ENCODE measurements at regions of chr19 and their contacts with region 1.

Region 1: GRCh38 chr19:2449019-2449418 is 7.7 kb downstream of the LMNB2 start:
- DNase-seq: no peak
- H3K4me3 ChIP-seq: no peak overlapping the region
- H3K4me3 Mint-ChIP-seq: no peak overlapping the region
- H3K27ac ChIP-seq: no peak overlapping the region
- H3K27ac Mint-ChIP-seq: peak overlapping the region in 1 of 8 donors; percentile 68
- H3K4me1 ChIP-seq: no peaks in the 10 kb centered on the region
- H3K4me1 Mint-ChIP-seq: peaks cover 7 to 24% (median 10%) of the 10 kb centered on the region in 3 donors
- H3K27me3 ChIP-seq: no peaks in the 10 kb centered on the region
- H3K27me3 Mint-ChIP-seq: no peaks in the 10 kb centered on the region

Region 2: DNA sequence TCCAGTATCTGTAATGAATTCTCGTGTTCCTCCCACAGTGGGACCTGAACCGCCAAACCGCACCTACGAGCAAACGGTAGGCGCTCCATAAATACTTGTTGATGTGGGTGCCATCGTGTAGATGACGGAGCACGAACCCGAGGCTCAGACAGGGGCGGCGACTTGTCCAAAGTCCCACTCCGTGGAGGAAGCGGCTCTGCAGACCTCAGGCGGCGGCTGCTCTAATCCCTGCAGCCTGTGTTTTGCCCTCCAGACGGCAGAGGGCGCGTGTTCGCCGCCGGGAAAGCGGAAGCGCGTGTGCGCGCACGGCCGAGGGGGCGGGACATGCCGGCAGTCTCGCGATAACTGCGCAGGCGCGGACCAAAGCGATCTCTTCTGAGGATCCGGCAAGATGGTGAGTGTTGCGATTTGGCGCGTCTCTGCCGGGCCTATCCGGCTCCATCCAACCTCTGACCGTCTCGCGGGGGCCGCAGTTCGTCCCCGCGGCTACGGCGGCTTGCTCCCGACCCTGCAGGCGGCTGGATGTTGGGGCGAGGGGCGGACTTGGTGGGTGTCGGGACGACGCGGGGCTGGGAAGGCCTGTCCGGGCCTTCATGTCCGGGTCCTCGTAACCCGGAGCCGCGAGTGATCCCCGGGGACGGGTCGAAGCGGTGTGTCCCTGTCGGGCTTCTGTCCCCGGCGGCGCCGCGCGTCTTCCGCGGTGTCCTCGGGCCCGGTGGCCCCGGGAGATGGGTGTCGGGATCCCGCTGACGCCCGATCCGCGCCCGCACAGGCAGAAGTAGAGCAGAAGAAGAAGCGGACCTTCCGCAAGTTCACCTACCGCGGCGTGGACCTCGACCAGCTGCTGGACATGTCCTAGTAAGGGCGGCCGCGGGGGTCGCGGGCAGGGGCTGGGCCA is 1010.7 kb before region 1 on chr19 and contains the start of gene RPS15:
- CTCF ChIA-PET with region 1: no interaction called
- POLR2A ChIA-PET with region 1: interaction called, 10 read pairs
- DNase-seq: peak; percentile 94 to 98 (median 95)
- H3K4me3 ChIP-seq: peak within 1 kb of the TSS; percentile 89
- H3K4me3 Mint-ChIP-seq: peak within 1 kb of the TSS; percentile 96 to 100 (median 97)
- H3K27ac ChIP-seq: peak within 1 kb of the TSS; percentile 91
- H3K27ac Mint-ChIP-seq: peak within 1 kb of the TSS; percentile 96 to 100 (median 98)
- H3K4me1 ChIP-seq: peaks cover 27% of the 10 kb centered on the region
- H3K4me1 Mint-ChIP-seq: peaks cover 23 to 35% (median 30%) of the 10 kb centered on the region in 3 donors
- H3K27me3 ChIP-seq: no peaks in the 10 kb centered on the region
- H3K27me3 Mint-ChIP-seq: no peaks in the 10 kb centered on the region
- total RNA-seq, gene RPS15: 1,485 to 1,540 TPM